Aorta (tissue), 5 donors: ENCODE measurements at regions of chr16 and their contacts with region 1.

Region 1: GRCh38 chr16:13793841-13794409 is 126.0 kb upstream of the ERCC4 start:
- DNase-seq: peak; percentile 68 to 74
- ATAC-seq: peak; percentile 66
- H3K4me3 ChIP-seq: no peak overlapping the region
- H3K27ac ChIP-seq: peak overlapping the region in 1 of 2 donors; percentile 9
- H3K4me1 ChIP-seq: peaks cover 3 to 10% of the 10 kb centered on the region in 2 donors
- H3K27me3 ChIP-seq: no peaks in the 10 kb centered on the region

Region 2: DNA sequence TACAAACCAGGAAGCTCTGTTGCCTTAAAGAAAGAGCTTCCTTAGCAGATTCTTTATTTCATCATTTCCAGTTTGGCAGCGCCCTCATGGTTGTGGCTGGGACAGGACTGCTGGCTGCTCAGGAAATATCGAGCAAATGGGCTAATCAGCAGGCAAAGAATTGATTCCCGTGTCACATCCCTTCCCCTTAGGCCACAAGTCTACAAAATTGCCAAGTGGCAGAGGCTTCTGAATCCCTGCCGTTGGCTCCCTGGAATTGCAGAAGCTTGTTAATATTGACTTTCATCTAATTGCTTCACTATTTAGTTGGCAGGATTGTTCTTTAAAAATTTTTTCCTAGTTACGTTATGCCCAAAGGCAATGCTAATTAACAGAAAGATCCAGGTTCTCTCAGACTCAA is 330.3 kb before region 1 on chr16:
- intact Hi-C with region 1: no loop called
- DNase-seq: no peak
- ATAC-seq: no peak
- H3K4me3 ChIP-seq: no peak overlapping the region
- H3K27ac ChIP-seq: no peak overlapping the region
- H3K4me1 ChIP-seq: no peaks in the 10 kb centered on the region
- H3K27me3 ChIP-seq: no peaks in the 10 kb centered on the region

Region 3: GRCh38 chr16:13633391-13633861 is 160.5 kb before region 1 on chr16:
- intact Hi-C with region 1: loop called in 1 of 2 experiments (anchors 10 kb)
- DNase-seq: no peak
- ATAC-seq: no peak
- H3K4me3 ChIP-seq: no peak overlapping the region
- H3K27ac ChIP-seq: no peak overlapping the region
- H3K4me1 ChIP-seq: no peaks in the 10 kb centered on the region
- H3K27me3 ChIP-seq: peaks cover 0 to 1% of the 10 kb centered on the region in 2 donors

Region 4: GRCh38 chr16:13856398-13856797 is 62.5 kb after region 1 on chr16:
- intact Hi-C with region 1: loop called in 1 of 2 experiments (anchors 2 kb)
- DNase-seq: no peak
- ATAC-seq: no peak
- H3K4me3 ChIP-seq: no peak overlapping the region
- H3K27ac ChIP-seq: peak overlapping the region in 1 of 2 donors; percentile 72
- H3K4me1 ChIP-seq: peaks cover 0 to 3% of the 10 kb centered on the region in 2 donors
- H3K27me3 ChIP-seq: no peaks in the 10 kb centered on the region